ENCODE measurements at regions of chr9 and their contacts with region 1.

Region 1: DNA sequence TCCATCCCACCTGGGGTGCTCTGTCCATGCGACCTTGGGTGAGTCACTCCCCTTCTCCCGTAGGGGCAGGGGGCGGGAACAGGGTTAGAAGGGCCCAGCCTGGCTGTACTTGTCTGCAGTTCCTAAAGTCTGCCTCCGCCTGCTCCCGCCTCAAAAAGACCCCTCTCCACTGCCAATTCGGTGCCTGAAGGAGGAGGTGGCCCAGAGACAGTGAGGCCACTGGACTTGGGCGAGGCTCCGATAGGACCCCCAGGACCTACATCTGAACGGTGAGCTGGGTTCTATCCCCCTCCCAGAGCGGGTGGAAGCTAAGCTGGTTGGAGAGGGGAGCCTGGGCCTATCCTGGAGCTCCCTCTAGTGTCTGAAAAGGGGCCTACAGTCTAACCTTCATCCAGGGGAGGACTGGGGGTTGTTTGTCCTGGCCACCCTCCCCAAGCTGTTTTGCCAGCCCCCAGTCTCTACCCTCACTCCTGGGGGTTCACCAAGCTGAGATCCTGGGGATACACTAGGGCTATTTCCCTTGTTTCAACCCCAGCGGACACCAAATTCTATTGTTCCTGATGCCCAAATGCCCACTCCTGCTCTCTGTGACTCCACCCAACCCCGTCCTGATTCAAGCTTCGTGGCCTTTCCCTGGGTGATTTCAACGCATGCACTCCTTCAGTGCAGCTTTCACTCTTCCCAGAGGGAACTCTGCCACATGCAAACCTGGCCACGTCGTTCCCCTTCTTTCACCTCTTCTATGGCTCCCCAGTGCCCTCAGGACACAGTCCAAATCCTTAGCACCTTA is 6.1 kb upstream of the CRB2 start:
- DNase-seq: peak; percentile 81
- H3K4me3 ChIP-seq: no peak overlapping the region
- H3K27ac ChIP-seq: no peak overlapping the region
- H3K4me1 ChIP-seq: peaks cover 14% of the 10 kb centered on the region
- H3K27me3 ChIP-seq: no peaks in the 10 kb centered on the region
- CTCF ChIP-seq: peak; percentile 64 to 95 (median 80)
- POLR2A ChIP-seq: no peak

Region 2: DNA sequence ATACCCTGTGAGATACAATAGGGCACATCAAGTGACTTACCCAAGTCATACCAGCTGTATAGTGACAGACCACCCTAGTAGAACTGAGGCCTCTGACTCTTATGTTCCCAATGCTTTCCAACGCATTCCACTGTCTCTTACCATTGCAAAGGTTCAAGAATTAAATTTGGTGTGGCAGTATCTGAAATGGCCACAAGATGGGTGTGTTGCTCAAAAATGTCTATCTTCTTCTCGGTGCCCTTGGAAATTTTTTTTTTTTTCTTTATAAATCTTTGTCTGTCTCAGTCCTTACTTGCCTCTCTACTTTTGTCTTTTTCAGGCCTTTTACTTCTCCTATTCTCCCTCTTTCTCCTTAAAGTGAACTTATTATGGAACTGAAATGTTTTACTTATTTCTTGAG is 268.1 kb before region 1 on chr9:
- intact Hi-C with region 1: loop called (anchors 10 kb)
- DNase-seq: no peak
- H3K4me3 ChIP-seq: no peak overlapping the region
- H3K27ac ChIP-seq: no peak overlapping the region
- H3K4me1 ChIP-seq: no peaks in the 10 kb centered on the region
- H3K27me3 ChIP-seq: no peaks in the 10 kb centered on the region
- CTCF ChIP-seq: peak; percentile 31 to 70 (median 48)
- POLR2A ChIP-seq: no peak

Region 3: DNA sequence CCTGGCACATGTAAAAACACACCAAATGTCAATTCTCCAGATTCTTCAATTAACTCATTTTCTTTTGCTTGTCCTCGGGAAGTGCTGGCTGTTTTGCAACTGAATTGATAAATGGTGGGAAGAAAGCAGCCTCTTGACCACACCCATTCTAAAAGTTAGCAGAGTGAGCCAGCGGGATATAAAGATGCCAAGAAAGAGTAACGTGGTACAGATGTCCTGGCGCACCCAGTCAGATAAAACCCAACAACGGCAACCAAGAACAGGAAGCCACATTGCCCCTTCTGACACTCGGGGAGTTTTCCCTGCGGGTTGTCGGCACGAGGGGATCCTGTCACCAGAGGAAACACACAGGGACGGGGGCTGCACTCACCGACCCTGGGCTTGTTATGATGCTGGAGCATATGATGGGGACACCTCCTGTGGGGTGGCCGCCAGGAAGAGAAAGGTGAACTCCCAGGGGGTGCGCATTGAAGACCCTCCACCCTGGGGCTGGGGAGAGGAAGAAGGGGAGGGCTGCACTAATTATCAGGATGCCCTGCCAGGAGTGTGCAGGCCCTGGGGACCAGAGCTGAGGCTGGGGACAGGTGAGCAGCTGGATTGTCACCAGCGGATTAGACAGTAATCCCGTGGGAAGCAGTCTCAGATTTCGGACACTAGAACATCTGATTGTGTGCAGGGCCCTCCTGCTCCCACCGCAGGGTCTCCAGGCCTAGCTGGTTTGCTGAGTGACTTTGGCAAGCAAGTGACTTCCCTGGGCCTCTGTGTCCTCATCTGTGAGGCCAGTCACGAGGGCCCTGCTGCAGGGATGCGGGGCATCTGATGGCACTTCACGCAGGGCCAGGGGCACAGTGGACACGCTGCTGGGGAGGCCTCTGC is 65.3 kb after region 1 on chr9:
- intact Hi-C with region 1: no loop called
- DNase-seq: no peak
- H3K4me3 ChIP-seq: no peak overlapping the region
- H3K27ac ChIP-seq: no peak overlapping the region
- H3K4me1 ChIP-seq: no peaks in the 10 kb centered on the region
- H3K27me3 ChIP-seq: no peaks in the 10 kb centered on the region
- CTCF ChIP-seq: no peak
- POLR2A ChIP-seq: no peak